ENCODE measurements at regions of chr17 and their contacts with region 1.

Region 1: DNA sequence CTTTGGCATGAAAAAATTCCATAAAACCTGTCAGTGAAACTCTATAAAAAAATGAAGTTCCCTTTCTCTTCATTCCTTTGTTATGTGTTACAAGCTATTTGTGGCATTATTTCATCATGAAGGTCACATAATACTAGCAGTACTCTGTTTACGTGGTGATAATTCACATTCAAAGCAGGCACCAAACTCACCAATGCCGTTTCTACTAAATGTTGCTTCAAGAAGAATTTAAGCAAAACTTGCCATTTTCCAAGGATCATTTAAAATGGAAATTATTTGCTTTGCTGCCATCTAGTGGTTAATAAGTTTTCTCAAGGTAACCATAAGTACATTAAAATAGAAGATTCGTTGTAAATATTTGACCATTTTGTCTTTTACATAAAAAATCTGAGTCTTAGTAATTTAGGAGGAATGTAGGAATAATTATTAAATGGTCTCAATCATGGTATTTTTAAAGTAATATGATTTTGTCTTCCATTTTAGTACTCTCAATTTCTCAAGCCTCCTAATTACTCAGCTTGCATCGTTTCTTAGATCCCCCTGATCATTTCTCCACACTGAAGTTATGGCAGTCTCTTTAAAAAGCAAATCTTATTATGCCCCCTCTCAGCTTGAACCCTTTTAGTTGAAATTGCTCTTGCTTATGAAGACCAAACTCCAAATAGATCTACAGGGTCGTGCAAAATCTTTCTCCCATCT is 80.8 kb downstream of the OMG start:
- DNase-seq: no peak
- H3K4me3 Mint-ChIP-seq: no peak overlapping the region
- H3K27ac Mint-ChIP-seq: no peak overlapping the region
- H3K4me1 Mint-ChIP-seq: no peaks in the 10 kb centered on the region
- H3K27me3 Mint-ChIP-seq: no peaks in the 10 kb centered on the region

Region 2: GRCh38 chr17:31008374-31009041 is 207.7 kb before region 1 on chr17:
- intact Hi-C with region 1: loop called (anchors 1 kb)
- DNase-seq: peak; percentile 43
- H3K4me3 Mint-ChIP-seq: peak overlapping the region; percentile 85
- H3K27ac Mint-ChIP-seq: peak overlapping the region; percentile 70
- H3K4me1 Mint-ChIP-seq: peaks cover 30% of the 10 kb centered on the region
- H3K27me3 Mint-ChIP-seq: peaks cover 16% of the 10 kb centered on the region

Measured in activated T-helper 1 cell treated with anti-CD3 and anti-CD28 coated beads, Interleukin-12 subunit alpha, Interleukin-12 subunit beta, Interleukin-2, Interleukin-4 antibody, amounts not matched to agents 30 ng/mL and 10 ng/mL and 1 ng/mL, durations not matched to agents 14 hours and 24 hours and 36 hours (primary cell).